HAP-1 (cell line): ENCODE measurements at regions of chr18 and their contacts with region 1.

Region 1: GRCh38 chr18:45441110-45441842 is 174.0 kb upstream of the SLC14A2 start:
- DNase-seq: no peak
- H3K4me3 ChIP-seq: no peak overlapping the region
- H3K4me1 ChIP-seq: no peaks in the 10 kb centered on the region
- H3K27me3 ChIP-seq: no peaks in the 10 kb centered on the region

Region 2: DNA sequence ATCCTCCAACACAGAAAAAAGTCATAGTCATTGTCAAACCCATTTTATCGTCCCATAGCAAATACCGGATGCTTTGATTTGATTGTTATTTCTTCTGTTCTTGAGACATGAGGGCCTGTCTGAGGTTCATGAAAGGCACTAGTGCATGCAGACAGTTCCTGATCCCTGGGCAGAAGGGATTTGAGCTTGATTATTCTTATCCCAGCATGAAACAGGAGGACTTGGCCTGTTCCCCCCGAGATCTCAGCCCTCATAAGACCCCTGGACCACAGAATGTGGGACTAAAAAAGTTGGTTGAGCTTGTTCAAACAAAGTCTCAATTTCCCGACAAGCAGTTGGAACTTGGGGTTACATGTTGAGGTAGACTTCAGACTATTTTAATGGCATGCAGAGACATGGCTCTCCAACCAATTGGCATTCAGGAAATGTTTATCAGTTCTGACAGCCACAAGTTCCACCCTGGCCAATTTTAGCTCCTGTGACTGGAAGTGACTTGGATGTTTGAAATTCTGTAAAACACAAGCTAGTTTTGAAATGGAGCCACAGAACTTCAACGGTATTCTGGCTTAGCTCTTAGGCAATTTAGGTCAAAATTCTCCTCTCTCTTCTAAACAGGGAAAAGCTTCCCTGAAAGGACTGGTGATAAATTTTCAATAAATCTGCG is 192.9 kb before region 1 on chr18:
- in situ Hi-C with region 1: no loop called
- DNase-seq: no peak
- H3K4me3 ChIP-seq: no peak overlapping the region
- H3K4me1 ChIP-seq: no peaks in the 10 kb centered on the region
- H3K27me3 ChIP-seq: no peaks in the 10 kb centered on the region

Region 3: GRCh38 chr18:45526114-45526841 is 85.0 kb after region 1 on chr18:
- in situ Hi-C with region 1: loop called (anchors 25 kb)
- DNase-seq: no peak
- H3K4me3 ChIP-seq: no peak overlapping the region
- H3K4me1 ChIP-seq: no peaks in the 10 kb centered on the region
- H3K27me3 ChIP-seq: no peaks in the 10 kb centered on the region